ENCODE measurements at regions of chr12 and their contacts with region 1.

Region 1: DNA sequence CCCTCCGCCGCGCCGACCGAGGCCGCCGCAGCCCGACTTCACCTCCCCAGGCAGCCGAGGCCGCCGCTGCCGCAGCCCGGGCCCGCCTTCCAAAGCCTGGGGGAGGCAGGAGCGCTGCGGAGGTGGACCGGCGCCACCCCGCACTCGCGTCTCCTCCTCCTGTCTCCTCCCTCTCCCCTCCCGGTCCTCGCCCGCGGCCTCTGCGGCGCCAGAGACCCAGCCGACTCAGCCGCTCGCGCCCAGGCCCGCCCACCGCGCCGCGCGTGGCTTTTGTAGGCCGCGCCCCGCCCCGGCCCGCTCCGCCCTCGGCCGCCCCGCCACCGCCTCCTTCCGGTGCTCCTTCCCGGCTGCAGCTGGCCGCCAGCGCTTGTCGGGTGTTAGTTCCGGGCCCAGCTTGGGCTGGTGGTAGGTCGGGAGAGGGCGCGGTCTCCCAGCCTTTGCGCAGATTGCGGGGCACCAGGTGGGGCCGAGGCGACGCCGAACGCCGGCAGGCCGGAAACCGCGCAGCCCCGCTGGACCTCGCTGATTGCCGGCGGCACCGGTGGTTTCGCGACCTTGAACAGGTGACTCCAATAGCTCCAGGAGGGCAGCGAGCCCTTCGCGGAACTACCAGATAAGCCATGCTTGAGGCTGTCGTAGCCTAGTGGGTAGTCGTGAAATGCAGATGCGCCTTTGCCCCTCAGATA is at the start of gene CAPRIN2:
- DNase-seq: peak; percentile 87 to 97
- ATAC-seq: peak; percentile 94 to 96
- H3K4me3 ChIP-seq: peak within 1 kb of the TSS; percentile 75
- H3K27ac ChIP-seq: peak within 1 kb of the TSS; percentile 89 to 98
- H3K4me1 ChIP-seq: peaks cover 28% of the 10 kb centered on the region; the same call in 2 of the 3 replicates
- CTCF ChIP-seq: peak; percentile 43
- EP300 ChIP-seq: peak in 1 of 2 experiments; percentile 12; a peak in 1 of 5 replicates
- POLR2A ChIP-seq: peak; percentile 74
- RAD21 ChIP-seq: peak; percentile 66 to 82
- polyA plus RNA-seq, gene CAPRIN2: 26.2 and 31.6 TPM in 2 replicates

Region 2: GRCh38 chr12:30806989-30807694 is 52.3 kb after region 1 on chr12:
- CTCF ChIA-PET with region 1: interaction called, 18 read pairs
- POLR2A ChIA-PET with region 1: interaction called, 4 read pairs
- DNase-seq: peak in 1 of 2 experiments; percentile 76
- ATAC-seq: peak; percentile 88 to 93
- H3K4me3 ChIP-seq: no peak overlapping the region
- H3K27ac ChIP-seq: no peak overlapping the region
- H3K4me1 ChIP-seq: no peaks in the 10 kb centered on the region
- CTCF ChIP-seq: peak; percentile 76
- EP300 ChIP-seq: no peak
- POLR2A ChIP-seq: no peak
- RAD21 ChIP-seq: peak; percentile 93 to 95